CD8-positive, alpha-beta memory T cell (primary cell): ENCODE measurements at regions of chr15 and their contacts with region 1.

Region 1: GRCh38 chr15:68078365-68078764 is 24.2 kb downstream of the PIAS1 start:
- DNase-seq: no peak
- H3K4me3 ChIP-seq: no peak overlapping the region
- H3K4me3 Mint-ChIP-seq: peak overlapping the region in 2 of 7 donors; percentile 0 to 20
- H3K27ac ChIP-seq: no peak overlapping the region
- H3K27ac Mint-ChIP-seq: peak overlapping the region in 2 of 8 donors; percentile 2 to 69
- H3K4me1 ChIP-seq: peaks cover 70% of the 10 kb centered on the region
- H3K4me1 Mint-ChIP-seq: peaks cover 76 to 88% (median 87%) of the 10 kb centered on the region in 3 donors
- H3K27me3 ChIP-seq: no peaks in the 10 kb centered on the region
- H3K27me3 Mint-ChIP-seq: no peaks in the 10 kb centered on the region

Region 2: GRCh38 chr15:67456677-67457529 is 621.5 kb before region 1 on chr15:
- CTCF ChIA-PET with region 1: no interaction called
- POLR2A ChIA-PET with region 1: interaction called, 11 read pairs
- DNase-seq: peak; percentile 59 to 86 (median 70)
- H3K4me3 ChIP-seq: no peak overlapping the region
- H3K4me3 Mint-ChIP-seq: no peak overlapping the region
- H3K27ac ChIP-seq: no peak overlapping the region
- H3K27ac Mint-ChIP-seq: peak overlapping the region in 1 of 8 donors; percentile 1
- H3K4me1 ChIP-seq: no peaks in the 10 kb centered on the region
- H3K4me1 Mint-ChIP-seq: peaks cover 0 to 3% (median 3%) of the 10 kb centered on the region in 3 donors
- H3K27me3 ChIP-seq: peaks cover 4% of the 10 kb centered on the region
- H3K27me3 Mint-ChIP-seq: peaks cover 0 to 4% of the 10 kb centered on the region in 2 donors